Calu3 (cell line): ENCODE measurements at regions of chr5 and their contacts with region 1.

Region 1: DNA sequence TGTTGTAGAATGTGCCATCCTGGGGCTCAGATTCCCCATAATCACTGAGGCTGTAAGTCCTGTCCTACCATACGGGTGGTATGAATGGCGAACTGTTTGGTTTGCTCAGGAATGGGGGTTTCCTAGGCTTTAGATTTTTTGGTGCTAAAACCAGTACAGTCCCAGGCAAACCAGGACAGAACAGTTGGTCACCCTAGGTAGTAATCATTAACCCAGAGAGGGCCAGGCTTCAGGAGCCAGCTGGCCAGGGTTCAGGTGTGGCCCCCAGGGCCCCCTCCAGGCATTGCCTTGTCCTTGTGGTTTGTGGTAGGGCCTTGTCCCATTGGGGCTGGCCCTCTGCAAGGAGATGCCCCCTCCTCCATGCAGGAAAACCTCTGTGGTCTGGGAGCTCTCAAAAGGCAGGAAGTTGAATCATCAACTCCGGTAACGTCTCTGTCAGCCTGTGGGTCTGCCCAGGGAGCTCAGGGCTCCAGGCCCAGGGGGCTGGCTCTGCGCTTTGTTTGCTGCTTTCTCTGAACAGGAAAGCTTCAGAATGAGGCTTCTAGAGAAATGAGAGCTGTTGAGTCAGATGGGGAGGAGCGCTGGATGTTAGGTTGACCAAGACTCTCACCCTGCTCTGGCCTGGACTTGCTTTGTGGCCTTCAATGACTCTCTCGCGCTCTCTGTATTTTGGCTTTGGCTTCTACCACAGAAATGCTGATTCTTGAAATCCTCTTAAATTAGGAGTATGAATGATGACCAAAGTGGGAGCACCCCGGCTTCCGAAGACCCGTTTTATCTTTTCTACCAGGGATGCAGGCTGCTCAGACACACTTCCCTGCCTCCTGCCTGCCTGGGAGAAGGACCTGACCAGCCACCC is 22.2 kb upstream of the JADE2 start:
- DNase-seq: peak; percentile 95
- H3K4me3 Mint-ChIP-seq: peak overlapping the region; percentile 19
- H3K27ac Mint-ChIP-seq: peak overlapping the region; percentile 94
- H3K4me1 Mint-ChIP-seq: peaks cover 46% of the 10 kb centered on the region
- H3K27me3 Mint-ChIP-seq: no peaks in the 10 kb centered on the region
- CTCF ChIP-seq: no peak

Region 2: GRCh38 chr5:134411546-134412266 is 91.6 kb before region 1 on chr5 and contains the start of gene CDKN2AIPNL:
- CTCF ChIA-PET with region 1: interaction called, 16 read pairs
- intact Hi-C with region 1: no loop called
- DNase-seq: peak; percentile 98
- H3K4me3 Mint-ChIP-seq: peak within 1 kb of the TSS; percentile 99
- H3K27ac Mint-ChIP-seq: peak within 1 kb of the TSS; percentile 31
- H3K4me1 Mint-ChIP-seq: peaks cover 46% of the 10 kb centered on the region
- H3K27me3 Mint-ChIP-seq: no peaks in the 10 kb centered on the region
- CTCF ChIP-seq: peak; percentile 71
- total RNA-seq, gene CDKN2AIPNL: 43.7 and 51.6 TPM in 2 replicates

Region 3: GRCh38 chr5:134436523-134437339 is 66.6 kb before region 1 on chr5:
- CTCF ChIA-PET with region 1: interaction called, 10 read pairs
- intact Hi-C with region 1: loop called (anchors 1 kb)
- DNase-seq: peak; percentile 91
- H3K4me3 Mint-ChIP-seq: peak overlapping the region; percentile 29
- H3K27ac Mint-ChIP-seq: peak overlapping the region; percentile 80
- H3K4me1 Mint-ChIP-seq: peaks cover 62% of the 10 kb centered on the region
- H3K27me3 Mint-ChIP-seq: no peaks in the 10 kb centered on the region
- CTCF ChIP-seq: no peak

Region 4: GRCh38 chr5:134794082-134794481 is 290.8 kb after region 1 on chr5:
- CTCF ChIA-PET with region 1: no interaction called
- intact Hi-C with region 1: no loop called
- DNase-seq: no peak
- H3K4me3 Mint-ChIP-seq: no peak overlapping the region
- H3K27ac Mint-ChIP-seq: no peak overlapping the region
- H3K4me1 Mint-ChIP-seq: no peaks in the 10 kb centered on the region
- H3K27me3 Mint-ChIP-seq: no peaks in the 10 kb centered on the region
- CTCF ChIP-seq: no peak